H1 (cell line): ENCODE measurements at regions of chr19 and their contacts with region 1.

Region 1: GRCh38 chr19:42508892-42509444 is 19.3 kb downstream of the CEACAM1 start:
- DNase-seq: no peak
- H3K4me3 ChIP-seq: no peak overlapping the region
- H3K27ac ChIP-seq: no peak overlapping the region
- H3K4me1 ChIP-seq: peaks cover 0 to 9% (median 2%) of the 10 kb centered on the region in 4 experiments; a peak in 2 of 7 replicates
- H3K27me3 ChIP-seq: no peaks in the 10 kb centered on the region; a peak in 1 of 7 replicates
- CTCF ChIP-seq: no peak
- EP300 ChIP-seq: no peak
- POLR2A ChIP-seq: no peak
- RAD21 ChIP-seq: no peak

Region 2: DNA sequence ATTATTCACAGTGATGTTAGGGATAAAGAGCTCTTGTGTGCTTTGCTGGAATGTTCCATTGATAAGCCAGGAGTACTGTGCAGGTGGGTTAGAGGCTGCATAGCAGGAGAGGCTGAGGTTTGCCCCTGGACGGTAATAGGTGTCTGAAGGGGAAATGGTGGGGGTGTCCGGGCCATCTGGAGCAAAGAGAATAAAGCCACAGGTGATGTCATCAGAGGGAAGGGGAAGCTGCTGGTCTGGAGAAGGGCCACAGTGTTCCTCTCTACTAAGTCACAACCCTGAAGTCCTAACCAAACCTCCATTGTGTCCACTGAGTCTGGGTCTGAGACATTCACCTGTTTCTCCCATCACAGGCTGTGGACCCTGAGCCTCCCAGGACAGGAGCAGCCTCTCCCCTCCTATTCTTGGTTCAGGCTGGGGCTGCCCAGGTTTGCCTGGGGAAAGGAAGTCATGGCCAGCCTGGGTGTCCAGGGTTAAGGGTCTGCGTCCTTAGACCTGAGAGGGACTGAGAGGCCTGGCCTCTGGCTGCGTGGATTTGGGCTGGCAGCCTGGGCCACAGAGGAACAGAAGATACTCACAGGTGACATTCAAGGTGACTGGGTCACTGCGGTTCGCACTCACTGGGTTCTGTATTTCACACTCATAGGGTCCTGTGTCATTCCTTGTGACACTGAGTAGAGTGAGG is 12.5 kb after region 1 on chr19:
- CTCF ChIA-PET with region 1: interaction called, 10 read pairs
- POLR2A ChIA-PET with region 1: no interaction called
- DNase-seq: no peak
- H3K4me3 ChIP-seq: no peak overlapping the region
- H3K27ac ChIP-seq: no peak overlapping the region
- H3K4me1 ChIP-seq: no peaks in the 10 kb centered on the region
- H3K27me3 ChIP-seq: no peaks in the 10 kb centered on the region
- CTCF ChIP-seq: no peak
- EP300 ChIP-seq: no peak
- POLR2A ChIP-seq: no peak
- RAD21 ChIP-seq: no peak